GM12878 (cell line): ENCODE measurements at regions of chr1 and their contacts with region 1.

Region 1: GRCh38 chr1:30779294-30780071 is 21.9 kb upstream of the LAPTM5 start:
- DNase-seq: no peak
- ATAC-seq: peak; percentile 87
- H3K4me3 ChIP-seq: no peak overlapping the region
- H3K27ac ChIP-seq: no peak overlapping the region
- H3K4me1 ChIP-seq: peaks cover 21% of the 10 kb centered on the region
- H3K27me3 ChIP-seq: no peaks in the 10 kb centered on the region
- CTCF ChIP-seq: peak; percentile 91 to 97 (median 97)
- EP300 ChIP-seq: no peak
- POLR2A ChIP-seq: no peak
- RAD21 ChIP-seq: peak; percentile 99

Region 2: GRCh38 chr1:30724175-30724574 is 55.3 kb before region 1 on chr1:
- CTCF ChIA-PET with region 1: interaction called, 516 read pairs
- POLR2A ChIA-PET with region 1: interaction called, 79 read pairs
- RAD21 ChIA-PET with region 1: interaction called, 538 read pairs
- SMC1A ChIA-PET with region 1: interaction called, 427 read pairs
- in situ Hi-C with region 1: loop called (anchors 10 kb)
- intact Hi-C with region 1: loop called (anchors 1 kb)
- DNase-seq: no peak
- ATAC-seq: no peak; the same call in 2 of the 3 replicates
- H3K4me3 ChIP-seq: no peak overlapping the region
- H3K27ac ChIP-seq: no peak overlapping the region
- H3K4me1 ChIP-seq: peaks cover 11% of the 10 kb centered on the region
- H3K27me3 ChIP-seq: no peaks in the 10 kb centered on the region
- CTCF ChIP-seq: peak in 2 of 3 experiments; percentile 15 to 51; a peak in 4 of 6 replicates
- EP300 ChIP-seq: no peak
- POLR2A ChIP-seq: no peak
- RAD21 ChIP-seq: no peak

Region 3: GRCh38 chr1:30748699-30749401 is 30.6 kb before region 1 on chr1:
- CTCF ChIA-PET with region 1: interaction called, 161 read pairs
- POLR2A ChIA-PET with region 1: interaction called, 12 read pairs
- RAD21 ChIA-PET with region 1: interaction called, 198 read pairs
- SMC1A ChIA-PET with region 1: interaction called, 248 read pairs
- in situ Hi-C with region 1: no loop called
- intact Hi-C with region 1: loop called (anchors 1 kb)
- DNase-seq: no peak
- ATAC-seq: peak; percentile 1; the same call in 2 of the 3 replicates
- H3K4me3 ChIP-seq: peak overlapping the region; percentile 98
- H3K27ac ChIP-seq: peak overlapping the region; percentile 93
- H3K4me1 ChIP-seq: peaks cover 87% of the 10 kb centered on the region
- H3K27me3 ChIP-seq: no peaks in the 10 kb centered on the region
- CTCF ChIP-seq: no peak
- EP300 ChIP-seq: no peak
- POLR2A ChIP-seq: no peak; the same call in 1 of the 2 replicates
- RAD21 ChIP-seq: no peak

Region 4: GRCh38 chr1:30768830-30769718 is 10.4 kb before region 1 on chr1:
- CTCF ChIA-PET with region 1: interaction called, 24 read pairs
- POLR2A ChIA-PET with region 1: interaction called, 7 read pairs
- RAD21 ChIA-PET with region 1: interaction called, 198 read pairs
- SMC1A ChIA-PET with region 1: interaction called, 248 read pairs
- in situ Hi-C with region 1: no loop called
- intact Hi-C with region 1: no loop called
- DNase-seq: no peak
- ATAC-seq: peak; percentile 12
- H3K4me3 ChIP-seq: no peak overlapping the region
- H3K27ac ChIP-seq: no peak overlapping the region; the same call in none of the 2 replicates
- H3K4me1 ChIP-seq: peaks cover 40% of the 10 kb centered on the region
- H3K27me3 ChIP-seq: no peaks in the 10 kb centered on the region
- CTCF ChIP-seq: no peak
- EP300 ChIP-seq: no peak
- POLR2A ChIP-seq: no peak
- RAD21 ChIP-seq: no peak

Region 5: GRCh38 chr1:30903343-30904034 is 124.0 kb after region 1 on chr1:
- CTCF ChIA-PET with region 1: interaction called, 8 read pairs
- POLR2A ChIA-PET with region 1: no interaction called
- RAD21 ChIA-PET with region 1: interaction called, 10 read pairs
- SMC1A ChIA-PET with region 1: no interaction called
- in situ Hi-C with region 1: no loop called
- intact Hi-C with region 1: no loop called
- DNase-seq: no peak
- ATAC-seq: no peak
- H3K4me3 ChIP-seq: no peak overlapping the region
- H3K27ac ChIP-seq: no peak overlapping the region
- H3K4me1 ChIP-seq: no peaks in the 10 kb centered on the region
- H3K27me3 ChIP-seq: peaks cover 10 to 13% of the 10 kb centered on the region in 2 experiments
- CTCF ChIP-seq: no peak
- EP300 ChIP-seq: no peak
- POLR2A ChIP-seq: no peak
- RAD21 ChIP-seq: no peak

Region 6: DNA sequence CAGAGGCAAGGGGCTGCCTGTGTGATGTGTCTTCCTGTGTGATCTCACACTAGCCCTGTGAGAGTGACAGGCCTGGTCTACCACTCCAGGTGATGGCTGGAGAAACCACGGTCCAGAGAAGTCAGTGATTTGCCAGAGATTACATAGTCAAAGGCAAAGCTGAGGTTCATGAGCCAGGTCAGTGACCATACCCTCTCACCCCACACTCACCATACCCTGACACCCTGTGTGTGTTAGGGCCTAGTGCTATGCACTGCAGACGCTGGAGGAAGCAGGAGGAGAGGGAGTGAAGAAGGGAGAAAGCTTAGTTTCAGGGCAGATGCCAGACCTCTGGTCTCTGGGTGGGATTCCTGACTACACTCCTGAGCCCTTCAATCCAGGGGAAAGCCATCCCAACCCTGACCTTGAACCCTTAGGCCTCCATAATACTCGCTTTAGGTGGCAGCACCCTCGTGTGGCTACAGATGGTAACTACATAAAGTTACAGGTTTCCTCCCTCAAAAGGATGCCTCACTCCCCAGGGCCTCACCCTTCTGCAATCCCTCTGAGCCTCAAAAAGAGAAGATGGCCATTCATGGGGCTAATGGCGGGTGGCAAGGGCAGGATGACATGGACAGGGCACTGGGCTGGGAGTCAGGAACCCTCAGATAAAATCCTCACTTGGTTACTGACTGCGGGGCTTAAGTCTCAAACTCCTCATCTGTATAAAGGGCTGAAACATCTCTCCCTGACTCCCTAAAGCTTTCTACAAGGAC is 149.8 kb after region 1 on chr1:
- CTCF ChIA-PET with region 1: interaction called, 77 read pairs
- POLR2A ChIA-PET with region 1: no interaction called
- RAD21 ChIA-PET with region 1: interaction called, 5 read pairs
- SMC1A ChIA-PET with region 1: interaction called, 10 read pairs
- in situ Hi-C with region 1: no loop called
- intact Hi-C with region 1: loop called (anchors 5 kb)
- DNase-seq: no peak
- ATAC-seq: peak; percentile 91
- H3K4me3 ChIP-seq: no peak overlapping the region
- H3K27ac ChIP-seq: no peak overlapping the region
- H3K4me1 ChIP-seq: no peaks in the 10 kb centered on the region; the same call in 1 of the 2 replicates
- H3K27me3 ChIP-seq: no peaks in the 10 kb centered on the region
- CTCF ChIP-seq: peak; percentile 69 to 80 (median 79)
- EP300 ChIP-seq: no peak
- POLR2A ChIP-seq: no peak
- RAD21 ChIP-seq: peak; percentile 78